Endothelial cell of umbilical vein (primary cell): ENCODE measurements at regions of chr15 and their contacts with region 1.

Region 1: DNA sequence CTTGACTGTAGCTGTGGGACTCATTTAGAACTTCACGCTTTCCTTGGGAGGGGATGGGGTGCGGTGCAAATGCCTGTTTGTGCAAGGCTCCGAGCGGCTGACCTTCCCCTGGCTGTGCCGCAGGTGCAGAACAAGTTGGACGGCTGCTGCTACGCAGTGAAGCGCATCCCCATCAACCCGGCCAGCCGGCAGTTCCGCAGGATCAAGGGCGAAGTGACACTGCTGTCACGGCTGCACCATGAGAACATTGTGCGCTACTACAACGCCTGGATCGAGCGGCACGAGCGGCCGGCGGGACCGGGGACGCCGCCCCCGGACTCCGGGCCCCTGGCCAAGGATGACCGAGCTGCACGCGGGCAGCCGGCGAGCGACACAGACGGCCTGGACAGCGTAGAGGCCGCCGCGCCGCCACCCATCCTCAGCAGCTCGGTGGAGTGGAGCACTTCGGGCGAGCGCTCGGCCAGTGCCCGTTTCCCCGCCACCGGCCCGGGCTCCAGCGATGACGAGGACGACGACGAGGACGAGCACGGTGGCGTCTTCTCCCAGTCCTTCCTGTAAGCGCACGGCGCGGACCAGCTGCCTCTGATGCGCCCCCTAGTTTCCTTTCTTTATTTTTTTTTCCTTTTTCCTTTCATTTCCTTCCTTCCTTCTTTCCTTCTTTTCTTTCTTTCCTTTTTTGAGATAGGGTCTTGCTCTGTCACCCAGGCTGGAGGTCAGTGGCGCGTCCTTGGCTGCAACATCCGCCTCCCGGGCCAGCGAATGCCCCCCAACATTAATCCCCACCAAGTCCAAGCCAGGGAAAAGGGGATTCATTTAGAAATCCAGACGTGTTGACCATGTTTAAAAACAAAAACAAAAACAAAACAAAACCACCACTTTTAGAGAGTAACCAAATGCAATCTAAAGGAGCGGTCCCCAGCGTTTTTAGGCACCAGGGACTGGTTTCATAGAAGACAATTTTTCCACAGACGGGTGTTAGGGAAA is 42.7 kb downstream of the EIF2AK4 start:
- DNase-seq: peak; percentile 70
- H3K4me3 ChIP-seq: peak overlapping the region; percentile 2 to 56 (median 37)
- H3K27ac ChIP-seq: peak overlapping the region; percentile 28
- H3K4me1 ChIP-seq: peaks cover 4% of the 10 kb centered on the region
- H3K27me3 ChIP-seq: no peaks in the 10 kb centered on the region
- CTCF ChIP-seq: peak; percentile 30 to 40
- POLR2A ChIP-seq: no peak

Region 2: DNA sequence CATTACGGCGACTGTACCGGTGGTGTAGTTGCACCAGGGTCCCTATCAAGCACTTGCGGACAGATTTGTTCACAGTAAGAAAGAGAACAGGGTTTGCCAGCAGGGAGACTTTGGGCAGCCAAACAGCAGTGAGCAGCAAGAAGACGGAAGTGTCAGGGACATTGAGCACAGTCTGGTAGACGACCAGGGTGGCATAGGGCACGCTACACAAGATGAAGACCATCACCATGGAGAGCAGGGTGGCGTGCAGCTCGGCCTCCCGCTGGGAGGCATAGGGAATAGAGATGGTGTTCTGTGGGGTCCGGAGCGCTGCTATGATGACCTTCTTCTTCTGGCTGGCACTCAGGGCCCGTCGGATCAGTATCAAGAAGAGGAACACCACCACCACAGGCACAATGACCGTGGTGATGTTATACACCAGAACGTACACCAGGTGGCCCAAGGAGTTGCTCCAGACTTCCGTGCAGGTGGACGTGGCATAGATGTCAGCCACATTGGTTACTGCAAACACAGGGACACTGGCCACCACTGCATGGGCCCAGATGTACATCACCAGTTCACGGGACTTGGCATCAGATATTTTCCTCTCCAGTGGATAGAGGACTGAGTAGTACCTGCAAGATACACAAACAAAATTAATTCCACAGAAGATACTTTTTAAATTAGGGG is 174.8 kb before region 1 on chr15:
- CTCF ChIA-PET with region 1: no interaction called
- POLR2A ChIA-PET with region 1: no interaction called
- dilution Hi-C with region 1: no loop called
- intact Hi-C with region 1: loop called (anchors 5 kb)
- DNase-seq: peak; percentile 14
- H3K4me3 ChIP-seq: no peak overlapping the region
- H3K27ac ChIP-seq: no peak overlapping the region
- H3K4me1 ChIP-seq: no peaks in the 10 kb centered on the region
- H3K27me3 ChIP-seq: no peaks in the 10 kb centered on the region
- CTCF ChIP-seq: peak; percentile 21 to 32
- POLR2A ChIP-seq: no peak